Mammary epithelial cell (primary cell): ENCODE measurements at regions of chr9 and their contacts with region 1.

Region 1: DNA sequence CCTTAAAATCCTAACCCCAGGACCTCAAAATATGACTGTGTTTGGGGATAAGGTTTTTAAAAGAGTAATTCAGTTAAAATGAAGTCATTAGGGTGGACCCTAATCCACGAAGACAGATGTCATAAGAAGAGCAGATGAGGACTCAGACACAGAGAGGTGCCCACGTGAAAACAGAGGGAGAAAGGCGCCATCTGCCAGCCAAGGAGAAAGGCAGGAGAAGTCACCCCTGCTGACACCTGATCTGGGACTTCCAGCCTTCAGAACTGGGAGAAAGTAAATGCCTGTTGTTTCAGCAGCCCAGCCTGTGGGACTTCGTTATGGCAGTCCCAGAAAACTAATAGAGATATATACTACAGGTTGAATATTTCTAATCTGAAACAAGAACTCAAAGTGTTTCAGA is 67.4 kb downstream of the ROR2 start:
- DNase-seq: no peak
- H3K4me3 ChIP-seq: no peak overlapping the region
- H3K27ac ChIP-seq: no peak overlapping the region
- H3K4me1 ChIP-seq: no peaks in the 10 kb centered on the region
- H3K27me3 ChIP-seq: no peaks in the 10 kb centered on the region
- CTCF ChIP-seq: peak; percentile 8 to 44

Region 2: GRCh38 chr9:91734371-91734981 is 148.2 kb before region 1 on chr9:
- CTCF ChIA-PET with region 1: no interaction called
- dilution Hi-C with region 1: no loop called
- in situ Hi-C with region 1: no loop called
- intact Hi-C with region 1: loop called (anchors 1 kb)
- DNase-seq: peak; percentile 14
- H3K4me3 ChIP-seq: no peak overlapping the region
- H3K27ac ChIP-seq: no peak overlapping the region
- H3K4me1 ChIP-seq: no peaks in the 10 kb centered on the region
- H3K27me3 ChIP-seq: no peaks in the 10 kb centered on the region
- CTCF ChIP-seq: peak; percentile 98 to 99

Region 3: GRCh38 chr9:91933556-91934352 is 51.1 kb after region 1 on chr9:
- CTCF ChIA-PET with region 1: no interaction called
- dilution Hi-C with region 1: no loop called
- in situ Hi-C with region 1: no loop called
- intact Hi-C with region 1: no loop called
- DNase-seq: no peak
- H3K4me3 ChIP-seq: no peak overlapping the region
- H3K27ac ChIP-seq: no peak overlapping the region
- H3K4me1 ChIP-seq: no peaks in the 10 kb centered on the region
- H3K27me3 ChIP-seq: peaks cover 1% of the 10 kb centered on the region
- CTCF ChIP-seq: no peak